ENCODE measurements at regions of chr4 and their contacts with region 1.

Region 1: DNA sequence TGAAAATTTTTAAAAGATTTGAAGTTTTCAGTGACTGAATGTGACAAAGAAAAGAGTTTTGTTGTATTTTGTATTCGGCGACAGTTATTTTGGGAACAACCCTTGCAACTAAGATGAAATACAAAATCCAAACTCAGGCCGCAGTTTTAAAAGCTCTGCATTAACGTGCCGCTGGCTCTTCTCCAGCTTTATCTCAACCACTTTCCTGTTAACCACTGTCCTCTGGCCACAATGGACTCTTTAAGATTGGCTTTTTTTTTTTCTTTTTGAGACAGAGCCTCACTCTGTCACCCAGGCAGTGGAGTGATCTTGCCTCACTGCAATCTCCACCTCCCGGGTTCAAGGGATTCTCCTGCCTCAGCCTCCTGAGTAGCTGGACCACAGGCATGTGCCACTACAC is 22.1 kb upstream of the AMTN start:
- DNase-seq: no peak
- ATAC-seq: no peak
- H3K4me3 ChIP-seq: no peak overlapping the region
- H3K27ac ChIP-seq: no peak overlapping the region
- H3K4me1 ChIP-seq: no peaks in the 10 kb centered on the region
- H3K27me3 ChIP-seq: no peaks in the 10 kb centered on the region

Region 2: DNA sequence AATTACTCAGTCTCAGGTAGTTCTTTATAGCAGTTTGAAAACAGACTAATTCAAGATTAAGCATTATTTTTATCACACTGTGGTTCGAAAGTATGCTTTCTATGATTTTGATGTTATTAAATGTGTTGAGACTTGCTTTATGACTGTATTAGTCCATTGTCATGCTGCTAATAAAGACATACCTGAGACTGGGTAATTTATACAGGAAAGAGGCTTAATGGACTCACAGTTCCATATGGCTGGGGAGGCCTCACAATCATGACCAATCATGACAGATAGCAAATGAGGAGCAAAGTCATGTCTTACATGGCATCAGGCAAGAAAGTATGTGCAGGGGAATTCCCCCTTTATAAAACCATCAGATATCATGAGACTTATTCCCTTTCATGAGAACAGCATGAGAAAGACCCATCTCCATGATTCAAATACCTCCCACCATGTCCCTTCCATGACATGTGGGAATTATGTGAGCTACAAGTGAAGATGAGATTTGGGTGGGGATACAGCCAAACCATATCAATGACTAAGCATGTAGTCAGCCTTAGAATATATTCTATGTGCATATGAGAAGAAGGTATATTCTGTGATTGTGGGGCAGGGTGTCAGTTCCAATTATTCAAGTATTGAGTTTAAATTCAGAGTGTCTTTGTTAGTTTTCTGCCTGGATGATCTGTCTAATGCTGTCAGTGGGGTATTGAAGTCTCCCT is 798.5 kb before region 1 on chr4:
- intact Hi-C with region 1: loop called in 1 of 4 experiments (anchors 10 kb)
- DNase-seq: no peak
- ATAC-seq: no peak
- H3K4me3 ChIP-seq: no peak overlapping the region
- H3K27ac ChIP-seq: no peak overlapping the region
- H3K4me1 ChIP-seq: no peaks in the 10 kb centered on the region
- H3K27me3 ChIP-seq: no peaks in the 10 kb centered on the region

Region 3: DNA sequence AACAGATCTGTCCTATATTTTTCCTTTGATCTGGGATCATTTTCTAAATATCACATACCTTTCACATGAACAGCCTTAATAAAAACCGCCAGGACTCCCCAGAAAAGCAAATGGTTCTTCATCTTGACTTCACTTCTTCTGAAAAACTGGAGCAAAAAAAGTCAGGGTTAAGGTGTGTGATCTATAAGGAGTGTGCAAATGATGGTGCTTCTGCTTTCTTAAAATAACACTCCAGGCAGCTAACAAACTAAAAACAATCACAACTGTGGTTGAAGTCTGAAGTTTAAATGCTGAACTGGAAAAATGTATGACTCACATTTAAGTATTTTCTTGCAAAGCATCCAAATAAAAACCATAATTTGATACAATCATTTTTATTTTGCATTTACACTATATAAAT is 170.1 kb after region 1 on chr4 and contains the start of gene JCHAIN:
- intact Hi-C with region 1: no loop called
- DNase-seq: no peak
- ATAC-seq: no peak
- H3K4me3 ChIP-seq: no peak within 1 kb of the TSS
- H3K27ac ChIP-seq: no peak within 1 kb of the TSS
- H3K4me1 ChIP-seq: no peaks in the 10 kb centered on the region
- H3K27me3 ChIP-seq: no peaks in the 10 kb centered on the region
- total RNA-seq, gene JCHAIN: 1.8 to 20.0 (median 4.4) TPM

Region 4: DNA sequence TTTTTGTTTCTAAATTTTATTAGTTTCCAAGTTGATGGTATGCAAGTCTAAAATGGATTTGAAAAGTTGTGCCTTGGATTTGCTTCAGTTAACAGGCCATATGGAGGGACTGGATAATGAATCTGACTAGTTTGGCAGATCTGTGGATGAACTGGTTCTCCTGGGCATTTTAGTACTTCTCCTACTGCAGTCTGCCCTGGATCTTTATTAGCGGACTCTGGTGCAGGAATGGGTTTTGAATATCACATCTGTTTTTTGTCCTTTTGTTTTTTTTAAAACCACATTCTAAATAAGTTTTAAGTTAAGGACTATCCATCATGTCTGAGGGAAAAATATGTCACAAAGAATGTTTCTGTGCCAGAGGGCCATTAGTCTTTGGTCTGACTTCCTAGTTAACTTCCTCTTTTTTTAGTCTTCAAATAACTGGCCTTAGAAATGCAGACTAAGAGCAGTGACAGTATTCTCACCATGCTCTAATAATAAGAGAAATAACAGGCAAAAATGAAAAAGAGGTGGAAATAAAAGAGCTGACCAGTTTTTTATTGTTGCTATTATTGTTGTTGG is 483.3 kb after region 1 on chr4:
- intact Hi-C with region 1: no loop called
- DNase-seq: no peak
- ATAC-seq: no peak
- H3K4me3 ChIP-seq: no peak overlapping the region
- H3K27ac ChIP-seq: no peak overlapping the region
- H3K4me1 ChIP-seq: no peaks in the 10 kb centered on the region
- H3K27me3 ChIP-seq: no peaks in the 10 kb centered on the region

Measured in right cardiac atrium (tissue), 5 donors.